ENCODE measurements at regions of chr6 and their contacts with region 1.

Region 1: GRCh38 chr6:7725849-7726415 is at the start of gene BMP6:
- DNase-seq: peak; percentile 71
- ATAC-seq: peak; percentile 72
- H3K4me3 Mint-ChIP-seq: peak within 1 kb of the TSS; percentile 68
- H3K27ac Mint-ChIP-seq: no peak within 1 kb of the TSS
- H3K4me1 Mint-ChIP-seq: peaks cover 11% of the 10 kb centered on the region
- H3K27me3 Mint-ChIP-seq: peaks cover 68% of the 10 kb centered on the region
- CTCF ChIP-seq: no peak
- total RNA-seq, gene BMP6: 0.09 to 0.18 TPM

Region 2: DNA sequence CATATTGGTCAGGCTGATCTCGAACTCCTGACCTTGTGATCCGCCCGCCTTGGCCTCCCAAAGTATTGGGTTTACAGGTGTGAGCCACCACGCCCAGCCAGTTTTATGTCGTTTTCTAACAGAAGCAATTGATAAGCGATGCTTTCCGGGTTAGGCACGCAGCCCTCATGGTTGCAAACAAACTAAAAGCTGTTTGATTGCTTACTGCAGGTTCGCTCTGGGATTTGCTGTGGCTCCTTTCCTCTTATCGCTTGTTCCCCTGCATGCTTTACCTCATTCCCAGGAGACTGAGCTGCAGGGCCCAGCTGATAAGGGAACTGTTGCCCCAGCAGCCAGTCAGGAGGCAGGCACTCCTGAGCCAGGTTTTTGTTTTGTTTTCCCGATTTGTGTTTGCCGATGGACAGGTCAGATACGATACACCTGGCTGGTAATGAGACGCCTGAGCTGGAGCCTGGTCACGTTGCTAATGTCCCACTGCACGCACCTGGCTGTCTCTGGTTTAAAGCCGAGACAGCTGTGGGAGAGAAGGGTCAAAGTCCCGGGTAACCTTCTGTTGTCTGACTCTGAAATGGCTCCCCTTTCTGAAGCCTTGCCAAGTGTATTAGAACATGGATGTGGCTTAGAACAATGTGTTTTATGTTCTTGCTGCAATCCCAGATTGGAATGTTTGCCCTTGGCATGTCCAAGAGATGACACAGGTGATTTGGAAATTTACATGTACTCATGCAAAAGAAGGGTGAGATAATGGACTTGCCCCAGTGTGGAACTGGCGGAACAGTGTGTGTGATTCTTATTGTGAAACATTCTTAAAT is 164.6 kb before region 1 on chr6:
- CTCF ChIA-PET with region 1: no interaction called
- POLR2A ChIA-PET with region 1: no interaction called
- intact Hi-C with region 1: no loop called
- DNase-seq: no peak
- ATAC-seq: no peak
- H3K4me3 Mint-ChIP-seq: no peak overlapping the region
- H3K27ac Mint-ChIP-seq: no peak overlapping the region
- H3K4me1 Mint-ChIP-seq: no peaks in the 10 kb centered on the region
- H3K27me3 Mint-ChIP-seq: peaks cover 26% of the 10 kb centered on the region
- CTCF ChIP-seq: no peak

Region 3: DNA sequence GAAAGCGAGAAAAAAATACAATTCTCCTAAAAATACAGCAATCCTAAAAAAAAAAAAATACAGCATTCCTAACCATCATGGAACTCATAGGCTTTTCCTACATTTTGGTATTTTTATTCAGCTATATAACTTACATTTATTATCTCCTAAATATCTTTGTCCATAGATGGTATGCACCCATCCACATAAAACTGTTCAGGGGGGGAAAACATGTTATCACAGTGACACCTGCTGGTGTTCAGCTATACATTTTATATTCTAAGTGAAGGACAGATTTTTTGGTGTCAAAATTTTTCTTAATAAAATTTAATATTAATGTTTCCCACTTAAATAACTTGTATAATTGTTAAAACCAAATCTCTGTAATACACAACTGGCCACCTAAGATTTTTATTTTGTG is 280.3 kb after region 1 on chr6:
- CTCF ChIA-PET with region 1: interaction called, 8 read pairs
- POLR2A ChIA-PET with region 1: no interaction called
- intact Hi-C with region 1: loop called (anchors 2 kb)
- DNase-seq: peak; percentile 15
- ATAC-seq: no peak
- H3K4me3 Mint-ChIP-seq: no peak overlapping the region
- H3K27ac Mint-ChIP-seq: no peak overlapping the region
- H3K4me1 Mint-ChIP-seq: no peaks in the 10 kb centered on the region
- H3K27me3 Mint-ChIP-seq: no peaks in the 10 kb centered on the region
- CTCF ChIP-seq: peak; percentile 57

Region 4: DNA sequence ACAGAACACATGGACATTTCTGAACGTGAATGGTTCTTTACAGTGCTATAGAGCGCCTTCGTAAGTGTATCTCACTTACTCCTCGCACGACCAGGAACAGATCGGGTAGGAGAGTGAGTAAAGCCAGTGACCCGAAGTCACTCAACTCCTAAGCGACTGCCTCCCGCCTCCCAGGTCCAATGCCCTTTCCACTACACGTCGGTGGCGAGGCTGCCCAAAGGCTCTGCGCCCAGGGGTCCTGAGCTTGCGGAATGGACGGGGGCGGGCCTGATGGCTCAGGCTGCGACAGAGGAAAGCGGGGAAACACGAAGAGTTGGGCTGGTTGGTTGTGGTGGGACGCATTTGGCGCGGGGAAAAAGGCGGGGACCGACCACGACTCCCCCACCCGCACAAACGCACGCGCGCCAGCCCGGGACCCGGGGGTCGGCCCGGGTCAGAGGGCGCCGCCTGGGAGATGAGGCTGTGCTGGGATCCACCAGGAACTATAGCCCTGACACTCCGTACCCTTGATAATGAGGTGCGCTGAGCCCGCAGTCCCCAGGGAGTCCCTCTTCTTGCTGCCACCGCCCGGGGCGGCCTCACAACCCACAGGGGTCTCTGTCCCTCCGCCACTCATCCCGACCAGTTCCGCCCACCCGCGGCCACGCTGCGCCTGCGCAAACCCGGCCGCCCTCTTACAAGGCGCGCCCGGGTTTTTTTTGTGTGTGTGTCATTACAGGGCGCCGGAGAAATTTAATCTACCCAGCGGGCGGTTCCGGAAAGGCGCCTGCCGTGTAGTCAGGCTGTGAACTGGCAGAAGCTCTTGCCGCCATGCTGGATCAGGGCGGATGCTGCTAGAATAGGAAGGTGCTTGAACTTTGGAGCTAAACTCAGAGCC is 338.1 kb after region 1 on chr6 and contains the start of gene BLOC1S5:
- CTCF ChIA-PET with region 1: interaction called, 23 read pairs
- POLR2A ChIA-PET with region 1: no interaction called
- intact Hi-C with region 1: loop called (anchors 10 kb)
- DNase-seq: peak; percentile 99
- ATAC-seq: peak; percentile 91
- H3K4me3 Mint-ChIP-seq: peak within 1 kb of the TSS; percentile 93
- H3K27ac Mint-ChIP-seq: peak within 1 kb of the TSS; percentile 95
- H3K4me1 Mint-ChIP-seq: peaks cover 27% of the 10 kb centered on the region
- H3K27me3 Mint-ChIP-seq: no peaks in the 10 kb centered on the region
- CTCF ChIP-seq: no peak
- total RNA-seq, gene BLOC1S5: 23.7 to 26.2 TPM

Measured in activated CD8-positive, alpha-beta T cell treated with anti-CD3 and anti-CD28 coated beads for 36 hours (primary cell).